ENCODE measurements at regions of chr13 and their contacts with region 1.

Region 1: GRCh38 chr13:21579754-21580316 is 24.1 kb downstream of the MICU2 start:
- DNase-seq: no peak
- ATAC-seq: peak; percentile 92
- H3K4me3 Mint-ChIP-seq: peak overlapping the region; percentile 62
- H3K27ac Mint-ChIP-seq: peak overlapping the region; percentile 94
- H3K4me1 Mint-ChIP-seq: peaks cover 44% of the 10 kb centered on the region
- H3K27me3 Mint-ChIP-seq: no peaks in the 10 kb centered on the region

Region 2: GRCh38 chr13:21603531-21604448 is 24.0 kb after region 1 on chr13 and contains the start of gene MICU2:
- CTCF ChIA-PET with region 1: interaction called, 20 read pairs
- DNase-seq: peak; percentile 96
- ATAC-seq: peak; percentile 97
- H3K4me3 Mint-ChIP-seq: peak within 1 kb of the TSS; percentile 81
- H3K27ac Mint-ChIP-seq: peak within 1 kb of the TSS; percentile 90
- H3K4me1 Mint-ChIP-seq: peaks cover 30% of the 10 kb centered on the region
- H3K27me3 Mint-ChIP-seq: no peaks in the 10 kb centered on the region
- total RNA-seq, gene MICU2: 34.6 to 35.1 TPM

Measured in activated CD8-positive, alpha-beta memory T cell treated with anti-CD3 and anti-CD28 coated beads, Interleukin-2, amount 10 ng/mL, durations not matched to agents 7 days and 5 days (primary cell).